ENCODE measurements at regions of chr11 and their contacts with region 1.

Region 1: GRCh38 chr11:4187055-4187988 is 92.7 kb downstream of the RRM1 start:
- H3K4me3 ChIP-seq: peak overlapping the region; percentile 64
- H3K27ac ChIP-seq: peak overlapping the region; percentile 64; the same call in 1 of the 2 replicates
- H3K4me1 ChIP-seq: no peaks in the 10 kb centered on the region
- CTCF ChIP-seq: peak; percentile 96

Region 2: GRCh38 chr11:4006946-4007680 is 180.2 kb before region 1 on chr11:
- CTCF ChIA-PET with region 1: no interaction called
- POLR2A ChIA-PET with region 1: no interaction called
- H3K4me3 ChIP-seq: no peak overlapping the region
- H3K27ac ChIP-seq: no peak overlapping the region
- H3K4me1 ChIP-seq: no peaks in the 10 kb centered on the region
- CTCF ChIP-seq: no peak

Region 3: DNA sequence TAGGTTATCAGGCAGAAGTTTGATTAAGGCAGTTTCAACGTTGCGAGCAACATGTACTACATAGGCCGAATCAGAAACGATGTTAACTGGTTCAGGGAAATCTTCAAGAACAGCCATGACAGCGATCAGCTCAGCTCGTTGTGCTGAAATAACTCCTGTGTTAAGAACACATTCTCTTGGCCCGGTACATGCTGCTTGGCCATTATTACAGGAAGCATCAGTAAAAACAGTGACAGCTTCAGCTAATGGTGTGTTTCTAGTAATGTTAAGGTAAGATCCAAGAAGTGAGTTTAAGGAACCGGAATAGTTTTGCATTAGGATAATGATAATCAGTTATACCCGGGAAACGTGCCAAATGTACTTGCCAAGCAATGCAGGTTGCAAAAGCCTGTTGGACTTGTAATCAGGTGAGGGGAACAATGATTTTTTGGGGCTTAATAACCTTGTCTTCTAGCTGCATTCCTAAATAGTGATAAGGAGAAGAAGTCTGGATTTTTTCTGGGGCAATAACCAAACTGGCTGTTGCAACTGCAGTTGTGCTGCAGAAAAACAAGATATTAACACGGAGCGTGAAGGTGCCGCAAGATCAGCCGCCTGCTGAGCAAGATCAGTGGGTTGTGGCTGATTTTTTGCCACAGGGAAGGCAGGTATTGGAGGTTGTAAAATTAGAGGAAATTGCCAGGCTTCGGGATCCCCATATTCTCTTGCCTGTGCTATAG is 309.4 kb after region 1 on chr11:
- CTCF ChIA-PET with region 1: interaction called, 87 read pairs
- POLR2A ChIA-PET with region 1: no interaction called
- H3K4me3 ChIP-seq: no peak overlapping the region
- H3K27ac ChIP-seq: no peak overlapping the region
- H3K4me1 ChIP-seq: no peaks in the 10 kb centered on the region
- CTCF ChIP-seq: no peak

Region 4: GRCh38 chr11:4551346-4551979 is 364.1 kb after region 1 on chr11:
- CTCF ChIA-PET with region 1: interaction called, 18 read pairs
- POLR2A ChIA-PET with region 1: no interaction called
- H3K4me3 ChIP-seq: no peak overlapping the region
- H3K27ac ChIP-seq: no peak overlapping the region
- H3K4me1 ChIP-seq: no peaks in the 10 kb centered on the region
- CTCF ChIP-seq: no peak

Region 5: GRCh38 chr11:4577761-4578160 is 390.4 kb after region 1 on chr11:
- CTCF ChIA-PET with region 1: interaction called, 12 read pairs
- POLR2A ChIA-PET with region 1: no interaction called
- H3K4me3 ChIP-seq: no peak overlapping the region
- H3K27ac ChIP-seq: no peak overlapping the region
- H3K4me1 ChIP-seq: no peaks in the 10 kb centered on the region
- CTCF ChIP-seq: no peak

Measured in HEK293 (cell line).